Right lobe of liver (tissue), 6 donors: ENCODE measurements at regions of chr11 and their contacts with region 1.

Region 1: GRCh38 chr11:47204637-47204989 is 10.2 kb upstream of the DDB2 start:
- DNase-seq: no peak
- ATAC-seq: no peak
- H3K4me3 ChIP-seq: no peak overlapping the region
- H3K27ac ChIP-seq: no peak overlapping the region
- H3K4me1 ChIP-seq: peaks cover 0 to 8% (median 0%) of the 10 kb centered on the region in 4 donors
- H3K27me3 ChIP-seq: no peaks in the 10 kb centered on the region
- CTCF ChIP-seq: no peak
- POLR2A ChIP-seq: no peak

Region 2: DNA sequence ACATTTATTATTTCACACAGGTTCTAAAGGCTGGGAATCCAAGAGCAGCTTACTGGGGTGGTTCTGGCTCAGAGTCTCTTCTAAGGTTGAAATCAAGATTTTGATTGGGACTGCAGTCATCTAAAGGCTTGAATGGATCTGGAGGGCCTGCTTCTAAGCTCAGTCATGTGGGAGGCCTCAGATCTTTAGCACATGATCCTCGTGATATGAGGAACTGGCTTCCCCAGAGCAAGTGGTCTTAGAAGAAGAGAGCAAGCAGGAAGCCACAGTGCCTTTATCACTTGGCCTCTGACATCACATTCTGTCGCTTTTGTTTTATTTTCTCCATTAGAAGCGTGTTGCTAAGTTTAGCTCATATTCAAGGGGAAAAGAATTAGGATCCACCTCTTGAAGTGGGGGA is 116.8 kb before region 1 on chr11:
- intact Hi-C with region 1: no loop called
- DNase-seq: no peak
- ATAC-seq: no peak
- H3K4me3 ChIP-seq: no peak overlapping the region
- H3K27ac ChIP-seq: no peak overlapping the region
- H3K4me1 ChIP-seq: no peaks in the 10 kb centered on the region
- H3K27me3 ChIP-seq: no peaks in the 10 kb centered on the region
- CTCF ChIP-seq: no peak
- POLR2A ChIP-seq: no peak

Region 3: DNA sequence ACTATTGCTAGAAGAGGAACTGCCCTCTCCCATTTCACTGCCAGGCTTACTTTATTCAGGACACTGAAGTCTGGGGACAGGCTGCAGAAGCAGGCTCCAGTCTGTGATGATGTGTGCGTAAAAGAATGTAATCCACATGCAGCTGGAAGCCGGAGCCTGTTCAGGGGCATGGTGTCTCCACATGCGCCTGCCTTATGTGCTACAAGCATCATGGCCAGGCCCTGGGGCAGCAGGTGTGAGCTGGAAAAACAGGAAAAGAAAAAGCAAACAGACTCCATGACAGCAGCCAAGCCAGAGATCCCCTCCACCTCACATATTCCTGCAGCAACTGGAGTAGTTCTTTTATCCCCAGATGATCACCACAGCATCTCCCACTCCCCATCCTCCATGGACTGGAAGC is 61.3 kb before region 1 on chr11:
- intact Hi-C with region 1: loop called in 1 of 2 experiments (anchors 10 kb)
- DNase-seq: no peak
- ATAC-seq: peak; percentile 24 to 41 (median 38)
- H3K4me3 ChIP-seq: no peak overlapping the region
- H3K27ac ChIP-seq: no peak overlapping the region
- H3K4me1 ChIP-seq: no peaks in the 10 kb centered on the region
- H3K27me3 ChIP-seq: no peaks in the 10 kb centered on the region
- CTCF ChIP-seq: no peak
- POLR2A ChIP-seq: no peak

Region 4: GRCh38 chr11:47373876-47374720 is 169.5 kb after region 1 on chr11:
- intact Hi-C with region 1: no loop called
- DNase-seq: peak; percentile 86 to 88 (median 86)
- ATAC-seq: peak; percentile 84 to 91 (median 86)
- H3K4me3 ChIP-seq: no peak overlapping the region
- H3K27ac ChIP-seq: no peak overlapping the region
- H3K4me1 ChIP-seq: peaks cover 0 to 2% (median 0%) of the 10 kb centered on the region in 4 donors
- H3K27me3 ChIP-seq: no peaks in the 10 kb centered on the region
- CTCF ChIP-seq: peak; percentile 87 to 97 (median 96)
- POLR2A ChIP-seq: no peak